GM10248 (cell line): ENCODE measurements at regions of chr10 and their contacts with region 1.

Region 1: DNA sequence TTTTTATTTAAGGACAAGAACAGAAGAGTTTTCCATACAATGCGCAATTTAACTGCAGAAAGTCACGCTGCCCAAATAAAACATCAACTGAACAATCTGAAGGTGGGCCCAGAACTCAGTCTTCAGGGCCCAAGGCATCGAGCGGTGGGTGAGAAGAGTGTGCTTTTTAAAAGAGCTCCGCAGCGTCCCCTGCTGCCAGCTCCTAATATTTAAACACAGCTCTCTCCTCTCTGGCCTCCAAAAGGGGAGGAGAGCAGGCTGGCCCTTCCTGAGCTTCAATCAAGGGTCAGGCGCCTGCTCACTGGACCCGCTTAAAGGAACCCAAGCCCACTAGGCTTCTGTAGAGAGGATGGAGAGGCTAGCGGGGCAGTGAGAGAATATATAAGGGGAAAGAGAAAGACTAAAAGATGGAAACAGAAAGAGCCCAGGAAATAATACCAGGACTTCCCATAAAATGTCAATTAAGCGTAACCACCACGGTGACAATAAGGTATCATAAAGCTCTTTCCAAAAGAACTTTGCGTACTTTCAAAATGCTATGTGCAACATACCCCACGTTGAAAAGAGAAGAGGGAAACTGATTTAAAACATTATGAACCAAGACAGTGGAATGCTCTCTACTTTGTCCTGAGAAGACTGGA is 2.8 kb downstream of the FAM53B start:
- DNase-seq: peak; percentile 79
- CTCF ChIP-seq: peak; percentile 76

Region 2: GRCh38 chr10:124496150-124496549 is 245.3 kb before region 1 on chr10:
- CTCF ChIA-PET with region 1: no interaction called
- POLR2A ChIA-PET with region 1: no interaction called
- DNase-seq: no peak
- CTCF ChIP-seq: no peak

Region 3: GRCh38 chr10:124530215-124530665 is 211.2 kb before region 1 on chr10:
- CTCF ChIA-PET with region 1: interaction called, 69 read pairs
- POLR2A ChIA-PET with region 1: no interaction called
- DNase-seq: peak; percentile 95
- CTCF ChIP-seq: peak; percentile 99

Region 4: GRCh38 chr10:124619195-124619594 is 122.2 kb before region 1 on chr10:
- CTCF ChIA-PET with region 1: interaction called, 13 read pairs
- POLR2A ChIA-PET with region 1: no interaction called
- DNase-seq: peak; percentile 52
- CTCF ChIP-seq: no peak

Region 5: GRCh38 chr10:124688889-124689670 is 52.3 kb before region 1 on chr10:
- CTCF ChIA-PET with region 1: interaction called, 44 read pairs
- POLR2A ChIA-PET with region 1: no interaction called
- DNase-seq: peak; percentile 81
- CTCF ChIP-seq: no peak

Region 6: DNA sequence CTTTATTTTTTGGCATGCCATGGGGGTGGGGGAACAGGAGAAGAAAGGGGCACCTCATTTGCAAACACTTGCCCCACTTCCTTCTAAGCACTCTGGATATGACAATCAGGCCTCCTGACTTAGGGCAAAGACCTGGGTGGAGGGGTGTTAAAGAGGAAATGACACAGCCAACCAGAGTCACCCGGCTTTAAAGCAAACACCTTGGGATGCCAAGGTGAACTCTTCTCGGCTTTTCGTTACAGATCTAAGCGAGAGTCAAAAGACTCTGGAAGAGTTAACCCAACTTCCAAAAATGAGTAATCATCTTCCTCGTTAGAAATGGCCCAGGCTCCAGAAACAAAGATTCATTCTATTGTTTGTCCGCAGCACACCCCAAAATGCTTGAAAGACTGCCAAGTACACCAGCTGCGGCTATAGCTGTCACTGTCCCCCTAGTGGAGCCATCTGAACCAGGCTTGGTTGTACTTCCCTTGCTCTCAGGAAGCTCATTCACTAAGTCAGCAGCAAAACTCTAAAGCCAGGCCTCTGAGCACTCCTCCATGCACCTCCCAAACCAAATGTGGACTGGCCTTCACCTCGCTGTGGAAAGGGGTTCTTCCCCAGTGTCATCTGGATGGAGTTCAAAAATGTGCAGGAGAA is 22.1 kb before region 1 on chr10:
- CTCF ChIA-PET with region 1: interaction called, 75 read pairs
- POLR2A ChIA-PET with region 1: interaction called, 4 read pairs
- DNase-seq: peak; percentile 67
- CTCF ChIP-seq: peak; percentile 48

Region 7: DNA sequence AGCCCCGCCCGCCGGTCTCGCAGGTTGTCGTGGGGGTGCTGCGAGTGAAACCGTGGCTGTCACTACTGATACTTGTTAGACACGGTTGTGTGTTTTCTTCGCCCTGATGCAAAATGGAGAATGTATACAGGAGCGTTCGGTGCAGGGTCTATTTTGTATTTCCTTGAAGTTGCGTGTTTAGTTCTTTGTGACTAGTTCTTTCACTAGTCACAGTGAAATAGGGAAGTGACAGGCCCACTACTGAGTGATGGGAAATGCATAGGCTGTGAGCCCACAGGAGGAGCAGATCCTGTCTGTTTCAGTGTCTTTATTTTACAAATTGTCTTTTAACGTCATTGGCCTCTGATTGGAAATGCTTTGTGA is 60.9 kb after region 1 on chr10:
- CTCF ChIA-PET with region 1: interaction called, 14 read pairs
- POLR2A ChIA-PET with region 1: no interaction called
- DNase-seq: peak; percentile 41
- CTCF ChIP-seq: no peak

Region 8: DNA sequence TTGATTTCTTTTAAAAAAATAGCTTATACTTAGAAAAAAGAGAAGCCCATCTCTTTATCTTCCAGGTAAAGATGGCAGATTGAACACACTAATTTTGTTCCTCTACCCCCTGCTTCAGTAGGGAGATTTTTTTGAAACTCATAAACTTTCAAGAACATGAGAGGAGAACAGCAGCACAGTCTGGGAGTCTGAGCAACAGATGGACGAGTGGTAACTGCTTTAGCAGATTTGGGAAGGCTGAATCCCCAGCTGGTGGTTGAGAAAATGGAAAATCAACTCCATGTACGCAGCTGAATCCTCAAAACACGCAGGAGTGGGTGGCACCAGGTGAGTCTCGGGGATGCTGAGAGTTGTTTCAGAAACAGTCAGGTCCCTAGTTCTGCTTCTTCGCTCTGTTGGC is 533.6 kb after region 1 on chr10:
- CTCF ChIA-PET with region 1: no interaction called
- POLR2A ChIA-PET with region 1: no interaction called
- DNase-seq: no peak
- CTCF ChIP-seq: no peak